Activated naive CD4-positive, alpha-beta T cell treated with anti-CD3 and anti-CD28 coated beads for 36 hours (primary cell): ENCODE measurements at regions of chr1 and their contacts with region 1.

Region 1: GRCh38 chr1:192639607-192640368 is 3.8 kb downstream of the RGS13 start:
- DNase-seq: peak; percentile 12
- H3K4me3 Mint-ChIP-seq: no peak overlapping the region
- H3K27ac Mint-ChIP-seq: no peak overlapping the region
- H3K4me1 Mint-ChIP-seq: peaks cover 18% of the 10 kb centered on the region
- H3K27me3 Mint-ChIP-seq: peaks cover 7% of the 10 kb centered on the region

Region 2: DNA sequence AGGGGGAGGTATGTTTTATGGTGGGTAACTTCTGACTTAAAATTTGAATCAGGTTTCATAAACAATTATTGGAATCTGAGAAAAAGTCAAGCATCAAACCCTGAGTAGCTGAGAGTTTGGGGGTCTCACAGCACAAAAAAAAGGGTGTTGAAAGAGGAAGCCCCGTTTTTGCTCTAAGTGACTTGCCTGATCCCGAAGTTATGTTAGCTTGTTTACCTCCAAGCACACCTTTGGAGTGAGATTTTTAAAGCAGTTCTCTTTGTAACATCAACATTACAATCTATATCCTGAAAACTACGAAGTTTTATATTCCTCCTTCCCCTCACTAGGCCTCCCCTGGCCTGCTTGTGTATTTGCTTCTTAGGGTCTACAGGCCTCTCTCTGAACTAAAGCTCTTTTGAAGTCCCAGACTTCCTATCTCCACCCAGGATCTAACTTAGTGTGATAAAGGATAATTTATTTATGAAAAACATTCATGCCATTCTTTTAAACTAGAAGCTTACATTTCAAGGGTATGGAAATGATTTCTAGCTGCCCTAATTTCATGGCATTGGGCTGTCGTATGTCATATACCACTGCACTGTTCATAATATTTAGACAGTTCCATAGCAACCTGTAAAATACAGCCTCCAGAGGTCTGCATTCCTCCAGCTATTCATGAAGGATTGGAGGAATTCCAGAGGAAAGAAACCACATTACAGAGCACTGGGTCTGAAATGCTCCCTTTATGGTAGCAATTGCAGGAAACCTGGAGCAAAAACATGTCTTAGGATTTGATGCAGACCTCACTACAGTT is 100.3 kb before region 1 on chr1:
- CTCF ChIA-PET with region 1: interaction called, 3 read pairs
- intact Hi-C with region 1: loop called (anchors 1 kb)
- DNase-seq: no peak
- H3K4me3 Mint-ChIP-seq: no peak overlapping the region
- H3K27ac Mint-ChIP-seq: peak overlapping the region; percentile 51
- H3K4me1 Mint-ChIP-seq: peaks cover 28% of the 10 kb centered on the region
- H3K27me3 Mint-ChIP-seq: no peaks in the 10 kb centered on the region

Region 3: DNA sequence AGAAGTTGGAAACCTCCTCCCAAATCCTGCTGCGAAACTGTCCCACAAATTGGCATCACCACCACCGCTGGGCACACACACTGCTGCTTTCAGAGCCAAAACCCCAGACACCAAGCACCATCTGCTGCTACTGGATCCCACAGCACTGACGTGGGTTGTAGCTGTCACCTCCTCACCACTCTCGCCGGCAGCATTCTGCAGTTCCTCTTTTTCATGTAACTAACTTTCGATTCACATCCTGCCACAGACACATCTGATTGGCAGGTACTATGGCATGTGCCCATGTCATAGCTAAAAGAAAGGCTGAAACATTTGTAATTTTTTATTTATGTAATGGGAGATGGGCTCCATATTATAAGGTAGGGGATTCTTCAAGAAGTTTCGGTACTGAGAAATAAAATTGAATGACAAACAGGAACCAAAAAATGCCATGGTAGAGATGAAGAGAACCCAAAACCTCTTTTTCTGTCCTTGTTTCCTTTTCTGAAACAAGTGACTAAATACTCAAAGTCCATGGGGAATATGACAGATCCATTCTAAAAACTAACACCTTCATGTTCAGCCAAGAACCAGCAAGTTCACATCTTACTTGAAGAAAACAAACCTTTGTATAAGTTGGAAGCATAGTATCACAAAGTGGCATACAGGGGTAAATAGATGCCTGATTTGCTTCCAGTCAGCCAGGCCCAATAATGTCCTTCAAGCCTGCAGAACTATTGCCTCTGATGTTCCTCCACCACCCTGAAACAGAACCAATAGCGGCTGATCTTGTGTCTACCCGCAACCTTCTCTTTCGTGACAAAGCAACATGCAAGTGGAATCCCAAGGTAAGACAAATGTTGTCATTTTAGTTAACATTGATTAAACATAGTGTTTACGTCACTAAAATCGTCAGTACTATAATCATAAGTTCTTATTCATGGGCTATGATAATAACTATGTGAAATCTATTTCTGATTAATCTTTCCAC is 30.4 kb before region 1 on chr1:
- CTCF ChIA-PET with region 1: interaction called, 4 read pairs
- intact Hi-C with region 1: loop called (anchors 2 kb)
- DNase-seq: peak; percentile 79
- H3K4me3 Mint-ChIP-seq: peak overlapping the region; percentile 30
- H3K27ac Mint-ChIP-seq: no peak overlapping the region
- H3K4me1 Mint-ChIP-seq: peaks cover 14% of the 10 kb centered on the region
- H3K27me3 Mint-ChIP-seq: no peaks in the 10 kb centered on the region

Region 4: GRCh38 chr1:192936313-192937018 is 296.7 kb after region 1 on chr1:
- CTCF ChIA-PET with region 1: no interaction called
- intact Hi-C with region 1: loop called (anchors 1 kb)
- DNase-seq: peak; percentile 20
- H3K4me3 Mint-ChIP-seq: no peak overlapping the region
- H3K27ac Mint-ChIP-seq: peak overlapping the region; percentile 32
- H3K4me1 Mint-ChIP-seq: peaks cover 12% of the 10 kb centered on the region
- H3K27me3 Mint-ChIP-seq: no peaks in the 10 kb centered on the region

Region 5: DNA sequence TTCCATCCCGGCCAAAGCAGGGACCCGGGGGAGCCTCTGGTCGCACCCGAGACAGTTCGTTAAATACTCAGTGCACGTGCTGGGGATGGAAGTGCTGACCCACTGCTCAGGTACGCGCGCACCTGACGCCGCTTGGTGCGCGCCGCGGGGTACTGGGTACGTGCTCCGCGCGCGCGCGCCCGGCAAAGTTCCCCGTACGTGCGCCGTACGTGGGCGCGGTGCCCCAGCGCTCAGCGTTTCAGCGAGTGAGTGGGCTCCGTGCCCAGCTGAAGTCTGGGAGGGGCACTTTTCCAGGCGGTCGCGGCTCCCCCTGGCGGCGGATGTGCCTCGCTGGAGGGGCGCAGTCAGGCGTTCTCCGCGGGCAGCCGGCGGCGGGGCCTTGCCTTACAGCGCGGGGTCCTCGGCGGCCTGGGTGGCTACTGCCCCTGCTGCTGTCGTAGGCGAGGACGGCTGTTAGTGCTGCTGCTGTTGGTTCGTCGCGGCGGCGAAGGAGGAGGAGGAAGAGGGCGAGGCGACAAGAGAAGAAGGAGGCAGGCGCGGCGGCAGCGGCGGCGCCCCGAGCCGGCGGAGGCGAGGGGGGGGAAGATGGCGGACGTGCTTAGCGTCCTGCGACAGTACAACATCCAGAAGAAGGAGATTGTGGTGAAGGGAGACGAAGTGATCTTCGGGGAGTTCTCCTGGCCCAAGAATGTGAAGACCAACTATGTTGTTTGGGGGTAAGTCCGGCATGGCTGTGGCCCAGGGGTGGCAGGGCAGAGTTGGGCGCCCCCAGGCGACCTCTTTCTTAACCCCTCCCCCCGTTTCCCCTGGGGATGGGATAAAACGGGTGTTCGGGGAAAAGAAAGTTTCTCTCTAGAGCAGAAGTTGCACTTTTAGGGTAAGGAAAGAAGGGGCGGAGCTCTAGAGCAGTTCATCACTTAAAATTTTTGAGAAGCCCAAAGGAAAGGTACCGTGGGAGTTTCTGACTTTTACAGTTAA is 482.1 kb after region 1 on chr1 and contains the start of gene CDC73:
- CTCF ChIA-PET with region 1: no interaction called
- intact Hi-C with region 1: loop called (anchors 5 kb)
- DNase-seq: peak; percentile 97
- H3K4me3 Mint-ChIP-seq: peak within 1 kb of the TSS; percentile 92
- H3K27ac Mint-ChIP-seq: peak within 1 kb of the TSS; percentile 92
- H3K4me1 Mint-ChIP-seq: peaks cover 43% of the 10 kb centered on the region
- H3K27me3 Mint-ChIP-seq: peaks cover 1% of the 10 kb centered on the region
- total RNA-seq, gene CDC73: 39.0 to 45.2 TPM